Activated CD4-positive, alpha-beta T cell treated with anti-CD3 and anti-CD28 coated beads, Interleukin-2, amount 10 ng/mL, durations not matched to agents 24 days and 14 days (primary cell): ENCODE measurements at regions of chr1 and their contacts with region 1.

Region 1: DNA sequence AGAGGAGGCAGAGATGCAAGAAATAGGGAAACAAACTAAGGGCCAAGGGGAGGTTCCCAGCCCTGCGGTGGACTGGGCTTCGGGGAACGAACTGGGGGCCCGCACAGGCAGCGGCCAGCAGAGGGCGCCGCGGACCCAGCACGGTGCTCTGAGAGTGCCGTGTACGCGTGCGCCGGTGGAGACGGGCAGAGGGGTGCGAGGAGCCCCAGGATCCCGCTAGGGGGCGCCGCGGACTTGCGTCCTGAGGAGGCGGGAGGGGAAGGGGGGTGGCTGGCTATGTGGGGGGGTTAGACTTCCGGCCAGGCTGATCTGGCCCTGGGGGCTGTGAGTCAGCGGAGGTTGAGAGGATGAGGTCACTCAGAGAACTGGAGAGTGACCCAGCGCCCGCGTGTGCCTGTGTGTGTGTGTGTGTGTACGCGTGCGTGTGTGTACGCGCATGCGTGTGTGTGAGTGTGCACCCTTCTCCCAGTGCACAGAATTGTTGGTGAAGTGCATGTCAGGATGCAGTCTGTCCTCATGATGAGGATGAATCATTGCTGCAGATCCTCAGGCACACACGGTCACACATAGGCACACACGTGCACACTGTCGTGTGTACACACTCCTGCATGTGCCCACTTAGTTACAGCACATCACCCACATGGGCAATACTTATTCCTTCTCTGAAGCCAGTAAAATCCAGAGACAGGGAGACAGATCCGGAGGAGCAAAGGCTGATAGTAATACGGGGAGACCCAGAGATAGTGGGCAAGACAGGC is 17.0 kb downstream of the NES start:
- DNase-seq: peak; percentile 98
- H3K4me3 Mint-ChIP-seq: peak overlapping the region; percentile 93
- H3K27ac Mint-ChIP-seq: peak overlapping the region; percentile 93
- H3K4me1 Mint-ChIP-seq: peaks cover 58% of the 10 kb centered on the region
- H3K27me3 Mint-ChIP-seq: peaks cover 29% of the 10 kb centered on the region

Region 2: DNA sequence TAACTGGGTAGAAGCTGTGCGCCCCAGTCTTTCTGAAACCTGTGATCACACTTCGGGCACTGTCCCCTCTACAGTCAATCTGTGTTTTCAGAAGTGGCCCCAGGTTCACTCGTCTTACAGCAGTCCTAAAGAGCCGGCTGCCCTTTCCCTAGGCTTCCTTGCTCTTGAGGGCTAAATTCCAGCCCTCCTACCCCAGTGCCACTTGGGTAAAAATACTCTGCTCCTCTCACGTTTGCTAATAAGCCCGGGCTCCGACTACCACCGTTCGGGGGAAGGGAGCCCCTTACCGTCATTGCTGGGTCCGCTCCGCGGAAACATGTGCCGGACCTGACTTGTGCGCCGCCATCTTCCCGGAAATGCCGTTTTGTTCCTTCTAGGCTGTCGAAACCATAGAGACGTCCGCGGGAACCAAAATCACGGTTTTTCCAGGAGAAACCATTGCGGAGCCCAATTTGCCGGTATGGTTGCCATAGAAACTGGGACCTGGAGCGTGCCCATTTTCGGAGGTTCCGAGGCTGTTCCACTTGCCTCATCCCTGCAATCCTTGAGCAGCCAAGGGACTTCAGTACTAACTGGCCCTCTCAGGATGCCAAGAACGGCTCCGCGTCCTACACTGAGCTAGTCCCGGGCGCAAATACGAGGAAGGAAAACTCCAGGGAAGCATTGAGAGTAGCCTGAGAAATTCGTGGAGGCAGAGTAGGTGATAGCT is 58.9 kb before region 1 on chr1 and contains the start of gene GPATCH4:
- intact Hi-C with region 1: loop called (anchors 2 kb)
- DNase-seq: peak; percentile 95
- H3K4me3 Mint-ChIP-seq: peak within 1 kb of the TSS; percentile 88
- H3K27ac Mint-ChIP-seq: peak within 1 kb of the TSS; percentile 98
- H3K4me1 Mint-ChIP-seq: peaks cover 33% of the 10 kb centered on the region
- H3K27me3 Mint-ChIP-seq: no peaks in the 10 kb centered on the region
- total RNA-seq, gene GPATCH4: 99.0 and 99.2 TPM in 2 replicates

Region 3: DNA sequence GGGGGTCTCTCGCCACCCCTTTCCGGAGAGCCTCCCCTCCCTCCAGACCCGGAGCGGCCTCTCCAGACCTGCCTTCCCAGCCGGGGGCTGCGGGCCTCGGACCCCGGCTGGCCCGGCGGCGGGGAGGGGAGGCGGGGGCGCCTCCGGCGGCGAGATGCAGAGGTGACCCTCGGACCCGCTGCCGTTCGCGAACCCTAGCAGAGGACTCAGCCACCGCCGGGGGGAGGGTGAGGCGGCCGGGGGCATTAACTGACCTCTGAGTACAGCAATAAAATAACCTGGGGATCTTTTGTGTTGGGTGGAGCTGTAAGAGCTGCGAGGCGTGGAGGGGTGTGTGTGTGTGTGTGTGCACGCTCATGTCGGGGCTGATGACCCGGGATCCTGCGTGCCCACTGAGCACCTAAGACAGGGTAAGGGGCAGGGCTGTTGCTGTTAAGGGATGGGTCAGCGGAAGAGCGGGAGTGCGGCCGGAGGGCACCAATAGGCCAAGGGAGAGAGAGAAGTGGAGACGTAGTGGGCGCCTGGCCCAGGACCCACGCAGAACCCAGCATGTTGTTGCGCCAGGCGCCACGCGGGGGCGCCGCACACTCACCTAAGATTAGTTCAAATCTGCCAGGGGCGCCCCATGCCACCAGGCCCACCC is 34.6 kb before region 1 on chr1:
- intact Hi-C with region 1: loop called (anchors 1 kb)
- DNase-seq: peak; percentile 90
- H3K4me3 Mint-ChIP-seq: peak overlapping the region; percentile 84
- H3K27ac Mint-ChIP-seq: peak overlapping the region; percentile 50
- H3K4me1 Mint-ChIP-seq: peaks cover 9% of the 10 kb centered on the region
- H3K27me3 Mint-ChIP-seq: peaks cover 60% of the 10 kb centered on the region

Region 4: GRCh38 chr1:156641761-156642264 is 18.4 kb before region 1 on chr1 and contains the start of gene BCAN:
- intact Hi-C with region 1: loop called (anchors 1 kb)
- DNase-seq: peak; percentile 69
- H3K4me3 Mint-ChIP-seq: peak within 1 kb of the TSS; percentile 73
- H3K27ac Mint-ChIP-seq: no peak within 1 kb of the TSS
- H3K4me1 Mint-ChIP-seq: peaks cover 26% of the 10 kb centered on the region
- H3K27me3 Mint-ChIP-seq: peaks cover 74% of the 10 kb centered on the region
- total RNA-seq, gene BCAN: not detected in 2 replicates

Region 5: DNA sequence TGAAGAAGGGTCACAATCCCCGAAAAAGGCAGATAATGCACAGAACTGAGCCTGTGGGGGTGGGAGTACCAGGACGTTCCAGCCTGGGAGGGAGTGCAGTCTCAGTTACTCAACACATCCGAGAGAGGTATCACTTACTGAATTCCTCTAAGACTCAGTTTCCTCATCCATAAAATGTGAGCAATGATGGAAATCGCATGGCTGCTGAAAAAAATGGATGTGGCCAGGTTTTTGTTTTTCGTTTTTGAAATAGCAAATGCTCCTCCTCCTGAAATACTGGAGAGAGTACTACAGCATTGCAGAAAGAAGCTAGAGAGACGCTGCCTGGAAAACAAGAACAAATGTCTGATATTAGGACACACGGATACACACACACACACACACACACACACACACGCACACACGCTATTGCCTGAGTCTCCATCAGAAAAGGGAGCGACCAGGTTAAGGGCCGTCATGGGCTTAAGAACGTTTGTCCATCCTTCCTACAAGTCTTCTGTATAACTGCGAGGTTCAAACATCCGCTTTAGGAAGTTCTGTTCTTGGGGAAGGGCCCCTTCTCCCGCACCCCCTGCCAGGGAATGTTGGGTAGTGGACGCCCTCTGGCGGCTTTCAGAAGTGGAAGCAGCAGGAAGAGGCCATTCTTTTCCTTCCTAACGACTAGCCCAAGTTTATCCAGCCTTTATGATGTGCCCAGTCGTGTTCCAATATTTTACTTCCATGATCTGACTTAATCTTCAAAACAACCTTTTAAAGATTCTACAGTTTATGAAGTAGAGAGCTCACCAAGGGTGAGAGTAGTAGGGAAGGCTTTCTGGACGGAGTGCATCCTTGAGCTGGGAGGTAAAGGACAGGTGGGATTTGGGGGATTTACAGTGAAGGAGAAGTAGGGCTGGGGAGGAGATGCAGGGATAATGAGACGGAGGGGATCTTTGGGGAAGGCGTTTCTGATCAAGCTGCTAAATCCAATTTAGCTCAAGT is 17.7 kb after region 1 on chr1:
- intact Hi-C with region 1: loop called (anchors 2 kb)
- DNase-seq: peak; percentile 76
- H3K4me3 Mint-ChIP-seq: peak overlapping the region; percentile 31
- H3K27ac Mint-ChIP-seq: peak overlapping the region; percentile 6
- H3K4me1 Mint-ChIP-seq: peaks cover 13% of the 10 kb centered on the region
- H3K27me3 Mint-ChIP-seq: peaks cover 80% of the 10 kb centered on the region

Region 6: DNA sequence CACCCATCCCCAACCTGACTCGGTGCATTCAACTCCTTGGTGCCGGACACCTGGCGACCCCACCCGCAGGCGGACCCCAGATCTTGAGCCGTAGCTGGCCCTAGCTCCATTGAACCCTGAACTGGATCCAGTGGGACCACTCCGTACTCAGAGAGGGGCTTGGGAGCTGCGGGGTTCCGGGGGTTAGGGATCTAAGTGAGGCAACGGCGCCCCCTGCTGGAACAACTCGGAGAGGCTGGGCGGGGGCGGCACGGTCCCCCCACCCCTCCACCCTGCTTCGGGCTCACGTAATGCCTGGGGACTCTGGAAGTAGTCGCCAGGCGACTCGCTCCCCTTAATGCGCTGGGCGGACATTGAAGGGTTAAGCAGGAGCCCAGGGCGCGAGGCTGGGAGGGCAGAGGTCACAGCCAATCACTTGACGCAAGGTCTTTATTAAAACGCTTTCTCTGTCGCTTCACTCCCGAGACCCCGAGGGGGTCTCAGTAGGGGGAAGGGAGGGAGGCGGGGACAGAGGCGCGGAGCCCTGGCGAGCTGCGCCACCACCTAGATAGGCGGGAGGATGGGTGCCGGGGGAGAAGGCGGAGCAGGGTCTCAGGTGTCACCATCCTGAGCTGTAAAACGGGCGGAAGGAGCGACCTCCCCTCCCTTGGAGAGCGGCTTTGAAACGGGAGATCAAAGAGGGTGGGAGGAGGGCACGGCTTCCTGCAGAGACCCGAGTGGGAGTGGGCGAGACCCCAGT is 45.9 kb after region 1 on chr1:
- intact Hi-C with region 1: loop called (anchors 1 kb)
- DNase-seq: peak; percentile 90
- H3K4me3 Mint-ChIP-seq: peak overlapping the region; percentile 89
- H3K27ac Mint-ChIP-seq: peak overlapping the region; percentile 72
- H3K4me1 Mint-ChIP-seq: peaks cover 20% of the 10 kb centered on the region
- H3K27me3 Mint-ChIP-seq: peaks cover 42% of the 10 kb centered on the region